GM23248 (cell line): ENCODE measurements at regions of chr6 and their contacts with region 1.

Region 1: GRCh38 chr6:45922728-45923351 is 92.8 kb downstream of the CLIC5 start:
- DNase-seq: peak; percentile 88
- H3K4me3 ChIP-seq: 0 out of 2 replicates have a peak overlapping the region, but pooled peaks have one; percentile 13
- H3K27ac ChIP-seq: no peak overlapping the region
- H3K4me1 ChIP-seq: peaks cover 14% of the 10 kb centered on the region
- H3K27me3 ChIP-seq: no peaks in the 10 kb centered on the region

Region 2: DNA sequence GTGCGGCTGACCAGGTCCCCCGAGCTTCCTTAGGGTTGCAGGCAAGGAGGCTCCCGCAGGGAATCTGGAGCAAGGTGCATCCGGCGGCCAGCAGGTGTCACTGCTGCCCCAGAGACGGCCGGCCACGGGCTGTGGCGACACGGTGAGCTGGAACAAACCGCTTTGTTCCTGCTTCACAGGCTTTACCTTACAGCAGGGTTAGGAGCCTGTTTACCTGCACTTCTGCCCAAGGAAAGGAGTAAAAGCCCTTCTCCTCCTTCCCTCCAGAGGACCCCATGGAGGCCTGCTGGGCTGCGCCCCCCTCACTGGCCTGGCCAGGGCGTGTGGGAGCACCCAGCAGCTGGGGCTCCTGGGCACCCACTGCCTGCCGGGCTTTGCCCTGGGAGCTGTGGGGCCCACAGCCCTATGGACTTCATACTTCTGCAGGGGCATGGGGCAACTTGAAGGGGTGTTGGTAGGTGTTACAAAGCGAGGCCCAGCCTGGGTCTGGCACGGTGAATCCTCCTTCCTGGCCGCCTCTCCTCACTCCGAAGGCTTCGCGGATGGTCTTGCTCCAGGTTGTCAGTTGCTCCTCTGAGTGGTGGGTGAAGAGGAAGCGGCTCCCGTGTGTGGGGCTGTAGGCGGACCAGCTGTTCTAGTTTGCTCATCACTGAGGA is 1446.9 kb before region 1 on chr6:
- in situ Hi-C with region 1: loop called (anchors 25 kb)
- DNase-seq: peak; percentile 85
- H3K4me3 ChIP-seq: no peak overlapping the region
- H3K27ac ChIP-seq: no peak overlapping the region
- H3K4me1 ChIP-seq: no peaks in the 10 kb centered on the region
- H3K27me3 ChIP-seq: no peaks in the 10 kb centered on the region

Region 3: GRCh38 chr6:44642870-44643529 is 1279.8 kb before region 1 on chr6:
- in situ Hi-C with region 1: loop called (anchors 10 kb)
- DNase-seq: peak; percentile 61
- H3K4me3 ChIP-seq: no peak overlapping the region
- H3K27ac ChIP-seq: peak overlapping the region; percentile 23; the same call in 1 of the 2 replicates
- H3K4me1 ChIP-seq: peaks cover 9% of the 10 kb centered on the region
- H3K27me3 ChIP-seq: no peaks in the 10 kb centered on the region